ENCODE measurements at regions of chr2 and their contacts with region 1.

Region 1: DNA sequence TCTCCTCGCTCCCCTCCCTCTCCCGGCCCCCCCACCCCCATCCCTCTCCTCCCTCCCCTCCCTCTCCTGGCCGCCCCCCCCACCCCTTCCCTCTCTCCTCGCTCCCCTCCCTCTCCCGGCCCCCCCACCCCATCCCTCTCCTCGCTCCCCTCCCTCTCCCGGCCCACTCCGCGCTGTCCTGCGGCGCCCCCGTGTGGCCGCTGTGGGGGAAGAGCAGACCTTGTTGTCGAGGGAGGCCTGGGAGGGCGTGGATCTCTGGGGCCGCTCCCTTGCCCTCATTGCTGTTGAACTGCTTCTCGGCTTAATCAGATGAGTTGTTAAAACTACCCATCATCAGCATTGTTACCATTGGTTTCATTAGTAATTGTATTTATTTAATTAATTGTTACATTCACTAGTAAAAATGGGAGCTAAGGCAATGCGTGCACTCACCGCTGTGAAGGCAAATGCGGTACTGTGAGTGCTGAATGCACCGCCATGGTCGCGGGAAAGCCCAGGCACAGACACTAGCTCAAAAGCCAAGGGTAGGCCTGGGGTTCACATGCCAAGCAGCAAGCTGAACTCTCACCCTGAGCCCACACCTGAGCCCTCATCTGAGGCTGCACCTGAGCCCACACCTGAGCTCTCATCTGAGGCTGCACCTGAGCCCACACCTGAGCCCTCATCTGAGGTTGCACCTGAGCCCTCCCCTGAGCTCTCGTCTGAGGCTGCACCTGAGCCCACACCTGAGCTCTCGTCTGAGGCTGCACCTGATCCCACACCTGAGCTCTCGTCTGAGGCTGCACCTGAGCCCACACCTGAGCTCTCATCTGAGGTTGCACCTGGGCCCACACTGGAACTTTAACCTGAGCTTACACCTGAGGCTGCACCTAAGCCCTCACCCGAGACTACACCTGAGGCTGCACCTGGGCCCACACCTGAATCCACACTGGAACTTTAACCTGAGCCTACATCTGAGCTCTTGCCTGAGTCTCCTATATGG is 8.8 kb downstream of the RTP5 start:
- DNase-seq: no peak
- H3K4me3 ChIP-seq: no peak overlapping the region
- CTCF ChIP-seq: peak; percentile 90

Region 2: GRCh38 chr2:241665727-241666440 is 212.4 kb before region 1 on chr2:
- CTCF ChIA-PET with region 1: interaction called, 15 read pairs
- POLR2A ChIA-PET with region 1: no interaction called
- DNase-seq: no peak
- H3K4me3 ChIP-seq: no peak overlapping the region
- CTCF ChIP-seq: no peak

Region 3: GRCh38 chr2:241865957-241866789 is 12.1 kb before region 1 on chr2:
- CTCF ChIA-PET with region 1: interaction called, 44 read pairs
- POLR2A ChIA-PET with region 1: no interaction called
- DNase-seq: no peak
- H3K4me3 ChIP-seq: no peak overlapping the region
- CTCF ChIP-seq: no peak

Measured in AG04449 (cell line).